T-cell (primary cell): ENCODE measurements at regions of chr17 and their contacts with region 1.

Region 1: GRCh38 chr17:67475236-67475937 is 98.3 kb downstream of the PITPNC1 start:
- DNase-seq: peak; percentile 74 to 94 (median 83)
- ATAC-seq: peak; percentile 81 to 90 (median 82)
- H3K4me3 ChIP-seq: peak overlapping the region in 1 of 2 donors; percentile 34
- H3K4me3 Mint-ChIP-seq: peak overlapping the region; percentile 61 to 65 (median 61)
- H3K27ac ChIP-seq: peak overlapping the region; percentile 91
- H3K27ac Mint-ChIP-seq: peak overlapping the region; percentile 89 to 94
- H3K4me1 ChIP-seq: peaks cover 31 to 67% of the 10 kb centered on the region in 2 experiments
- H3K4me1 Mint-ChIP-seq: peaks cover 70 to 75% (median 74%) of the 10 kb centered on the region in 3 donors
- H3K27me3 ChIP-seq: no peaks in the 10 kb centered on the region
- H3K27me3 Mint-ChIP-seq: no peaks in the 10 kb centered on the region

Region 2: GRCh38 chr17:66873962-66874361 is 601.4 kb before region 1 on chr17:
- CTCF ChIA-PET with region 1: no interaction called
- POLR2A ChIA-PET with region 1: no interaction called
- DNase-seq: no peak
- ATAC-seq: no peak
- H3K4me3 ChIP-seq: no peak overlapping the region
- H3K4me3 Mint-ChIP-seq: no peak overlapping the region
- H3K27ac ChIP-seq: no peak overlapping the region
- H3K27ac Mint-ChIP-seq: no peak overlapping the region
- H3K4me1 ChIP-seq: no peaks in the 10 kb centered on the region
- H3K4me1 Mint-ChIP-seq: no peaks in the 10 kb centered on the region
- H3K27me3 ChIP-seq: peaks cover 0 to 13% of the 10 kb centered on the region in 2 experiments
- H3K27me3 Mint-ChIP-seq: peaks cover 22 to 25% of the 10 kb centered on the region in 2 donors

Region 3: GRCh38 chr17:67386965-67387551 is 88.3 kb before region 1 on chr17:
- CTCF ChIA-PET with region 1: interaction called, 4 to 16 read pairs
- POLR2A ChIA-PET with region 1: interaction called, 3 to 13 read pairs
- DNase-seq: peak in 19 of 35 experiments; percentile 28 to 74 (median 44)
- ATAC-seq: no peak
- H3K4me3 ChIP-seq: no peak overlapping the region
- H3K4me3 Mint-ChIP-seq: peak overlapping the region in 1 of 3 donors; percentile 45
- H3K27ac ChIP-seq: peak overlapping the region; percentile 46
- H3K27ac Mint-ChIP-seq: peak overlapping the region; percentile 93 to 94
- H3K4me1 ChIP-seq: peaks cover 27 to 78% of the 10 kb centered on the region in 2 experiments
- H3K4me1 Mint-ChIP-seq: peaks cover 78 to 84% (median 83%) of the 10 kb centered on the region in 3 donors
- H3K27me3 ChIP-seq: no peaks in the 10 kb centered on the region
- H3K27me3 Mint-ChIP-seq: no peaks in the 10 kb centered on the region

Region 4: GRCh38 chr17:67431249-67432048 is 43.9 kb before region 1 on chr17:
- CTCF ChIA-PET with region 1: interaction called in 1 of 2 experiments, 11 read pairs
- POLR2A ChIA-PET with region 1: interaction called, 4 to 13 read pairs
- DNase-seq: peak in 1 of 35 experiments; percentile 34
- ATAC-seq: peak in 2 of 4 experiments; percentile 12 to 17
- H3K4me3 ChIP-seq: no peak overlapping the region
- H3K4me3 Mint-ChIP-seq: peak overlapping the region in 2 of 3 donors; percentile 45 to 47
- H3K27ac ChIP-seq: peak overlapping the region; percentile 67
- H3K27ac Mint-ChIP-seq: peak overlapping the region; percentile 90 to 92
- H3K4me1 ChIP-seq: peaks cover 25 to 67% of the 10 kb centered on the region in 2 experiments
- H3K4me1 Mint-ChIP-seq: peaks cover 64 to 78% (median 77%) of the 10 kb centered on the region in 3 donors
- H3K27me3 ChIP-seq: no peaks in the 10 kb centered on the region
- H3K27me3 Mint-ChIP-seq: no peaks in the 10 kb centered on the region

Region 5: GRCh38 chr17:67452681-67453554 is 22.5 kb before region 1 on chr17:
- CTCF ChIA-PET with region 1: interaction called, 6 to 16 read pairs
- POLR2A ChIA-PET with region 1: interaction called, 5 to 6 read pairs
- DNase-seq: peak in 10 of 35 experiments; percentile 15 to 78 (median 36)
- ATAC-seq: peak; percentile 92 to 95 (median 94)
- H3K4me3 ChIP-seq: peak overlapping the region; percentile 20 to 27
- H3K4me3 Mint-ChIP-seq: peak overlapping the region; percentile 54 to 65 (median 62)
- H3K27ac ChIP-seq: peak overlapping the region; percentile 77
- H3K27ac Mint-ChIP-seq: peak overlapping the region; percentile 97 to 98
- H3K4me1 ChIP-seq: peaks cover 57 to 78% of the 10 kb centered on the region in 2 experiments
- H3K4me1 Mint-ChIP-seq: peaks cover 95 to 100% (median 96%) of the 10 kb centered on the region in 3 donors
- H3K27me3 ChIP-seq: no peaks in the 10 kb centered on the region
- H3K27me3 Mint-ChIP-seq: no peaks in the 10 kb centered on the region

Region 6: GRCh38 chr17:67528751-67529436 is 53.5 kb after region 1 on chr17:
- CTCF ChIA-PET with region 1: no interaction called
- POLR2A ChIA-PET with region 1: no interaction called
- DNase-seq: no peak
- ATAC-seq: no peak
- H3K4me3 ChIP-seq: no peak overlapping the region
- H3K4me3 Mint-ChIP-seq: no peak overlapping the region
- H3K27ac ChIP-seq: no peak overlapping the region
- H3K27ac Mint-ChIP-seq: no peak overlapping the region
- H3K4me1 ChIP-seq: peaks cover 0 to 17% of the 10 kb centered on the region in 2 experiments
- H3K4me1 Mint-ChIP-seq: peaks cover 26 to 48% (median 41%) of the 10 kb centered on the region in 3 donors
- H3K27me3 ChIP-seq: no peaks in the 10 kb centered on the region
- H3K27me3 Mint-ChIP-seq: no peaks in the 10 kb centered on the region

Region 7: DNA sequence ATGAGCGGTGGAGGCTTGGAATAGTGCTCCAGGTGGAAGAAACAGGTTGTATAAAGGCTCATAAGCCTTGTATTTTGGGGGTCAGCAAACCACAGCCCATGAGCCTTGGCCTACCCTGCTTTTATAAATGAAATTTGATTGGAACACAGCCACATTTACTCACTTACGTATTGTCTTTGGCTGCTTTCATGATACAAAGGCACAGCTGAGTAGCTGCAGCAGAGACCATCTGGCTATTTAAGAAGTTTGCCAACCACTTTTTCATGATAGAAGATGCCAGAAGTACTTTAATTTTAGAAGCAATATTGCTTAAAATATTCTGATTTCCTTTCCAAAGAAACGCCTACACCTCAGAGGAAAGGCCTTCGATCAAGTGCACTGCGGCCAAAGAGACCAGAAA is 447.1 kb after region 1 on chr17:
- CTCF ChIA-PET with region 1: no interaction called
- POLR2A ChIA-PET with region 1: interaction called in 1 of 2 experiments, 15 read pairs
- DNase-seq: no peak
- ATAC-seq: no peak
- H3K4me3 ChIP-seq: no peak overlapping the region
- H3K4me3 Mint-ChIP-seq: no peak overlapping the region
- H3K27ac ChIP-seq: no peak overlapping the region
- H3K27ac Mint-ChIP-seq: peak overlapping the region in 1 of 2 donors; percentile 41
- H3K4me1 ChIP-seq: no peaks in the 10 kb centered on the region
- H3K4me1 Mint-ChIP-seq: no peaks in the 10 kb centered on the region
- H3K27me3 ChIP-seq: no peaks in the 10 kb centered on the region
- H3K27me3 Mint-ChIP-seq: no peaks in the 10 kb centered on the region